ENCODE measurements at regions of chr10 and their contacts with region 1.

Region 1: GRCh38 chr10:80530251-80530650 is 7.5 kb upstream of the SH2D4B start:
- DNase-seq: no peak
- H3K4me3 ChIP-seq: no peak overlapping the region
- H3K27ac ChIP-seq: no peak overlapping the region
- H3K4me1 ChIP-seq: no peaks in the 10 kb centered on the region
- H3K27me3 ChIP-seq: no peaks in the 10 kb centered on the region
- CTCF ChIP-seq: peak; percentile 31 to 68

Region 2: DNA sequence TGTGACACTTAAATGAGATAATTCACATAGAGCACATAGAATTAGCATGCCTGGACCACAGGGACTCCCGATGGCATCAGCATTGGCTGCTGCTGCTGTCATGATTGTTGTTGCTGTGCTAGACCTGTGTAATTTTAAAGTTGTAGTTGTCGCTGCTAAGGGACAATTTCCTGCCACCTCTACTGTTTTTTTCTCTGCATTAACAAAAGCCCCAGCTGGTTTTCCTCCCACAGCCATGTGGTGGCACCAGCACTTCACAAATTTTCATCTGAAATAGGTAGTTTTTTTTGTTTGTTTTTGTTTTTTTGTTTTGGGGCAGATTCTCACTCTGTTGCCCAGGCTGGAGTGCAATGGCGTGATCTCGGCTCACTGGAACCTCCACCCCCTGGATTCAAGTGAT is 147.3 kb before region 1 on chr10:
- CTCF ChIA-PET with region 1: no interaction called
- dilution Hi-C with region 1: no loop called
- in situ Hi-C with region 1: no loop called
- intact Hi-C with region 1: loop called (anchors 1 kb)
- DNase-seq: peak; percentile 27
- H3K4me3 ChIP-seq: no peak overlapping the region
- H3K27ac ChIP-seq: no peak overlapping the region
- H3K4me1 ChIP-seq: no peaks in the 10 kb centered on the region
- H3K27me3 ChIP-seq: no peaks in the 10 kb centered on the region
- CTCF ChIP-seq: peak; percentile 66 to 69

Region 3: DNA sequence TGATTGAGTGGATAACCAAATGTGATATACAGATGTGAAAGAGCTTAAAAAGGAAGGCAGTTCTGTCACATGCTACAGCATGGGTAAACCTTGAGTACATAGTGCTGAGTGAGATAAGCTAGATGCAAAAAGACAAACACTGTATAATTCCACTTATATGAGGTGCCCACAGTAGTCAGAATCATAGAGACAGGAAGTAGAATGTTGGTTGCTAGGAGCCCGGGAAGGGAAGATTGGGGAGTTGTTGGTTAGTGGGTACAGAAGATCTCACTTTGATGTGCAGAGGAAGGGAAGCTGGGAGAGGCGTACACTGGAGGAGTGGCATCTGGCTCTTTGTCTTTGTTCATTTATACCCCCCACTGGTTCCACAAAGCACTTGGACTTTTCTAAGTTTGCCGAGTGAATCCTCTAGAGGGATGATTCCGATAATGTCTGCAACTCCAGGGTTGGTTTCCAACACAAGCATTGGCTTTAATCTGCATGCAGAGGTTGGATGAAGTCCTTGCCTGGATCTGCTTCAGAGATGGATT is 36.7 kb before region 1 on chr10:
- CTCF ChIA-PET with region 1: no interaction called
- dilution Hi-C with region 1: no loop called
- in situ Hi-C with region 1: no loop called
- intact Hi-C with region 1: no loop called
- DNase-seq: no peak
- H3K4me3 ChIP-seq: no peak overlapping the region
- H3K27ac ChIP-seq: no peak overlapping the region
- H3K4me1 ChIP-seq: peaks cover 49% of the 10 kb centered on the region
- H3K27me3 ChIP-seq: no peaks in the 10 kb centered on the region
- CTCF ChIP-seq: no peak

Region 4: GRCh38 chr10:80567291-80567690 is 37.0 kb after region 1 on chr10:
- CTCF ChIA-PET with region 1: no interaction called
- dilution Hi-C with region 1: no loop called
- in situ Hi-C with region 1: no loop called
- intact Hi-C with region 1: no loop called
- DNase-seq: no peak
- H3K4me3 ChIP-seq: no peak overlapping the region
- H3K27ac ChIP-seq: no peak overlapping the region
- H3K4me1 ChIP-seq: no peaks in the 10 kb centered on the region
- H3K27me3 ChIP-seq: no peaks in the 10 kb centered on the region
- CTCF ChIP-seq: no peak